IMR-90 (cell line): ENCODE measurements at regions of chr1 and their contacts with region 1.

Region 1: DNA sequence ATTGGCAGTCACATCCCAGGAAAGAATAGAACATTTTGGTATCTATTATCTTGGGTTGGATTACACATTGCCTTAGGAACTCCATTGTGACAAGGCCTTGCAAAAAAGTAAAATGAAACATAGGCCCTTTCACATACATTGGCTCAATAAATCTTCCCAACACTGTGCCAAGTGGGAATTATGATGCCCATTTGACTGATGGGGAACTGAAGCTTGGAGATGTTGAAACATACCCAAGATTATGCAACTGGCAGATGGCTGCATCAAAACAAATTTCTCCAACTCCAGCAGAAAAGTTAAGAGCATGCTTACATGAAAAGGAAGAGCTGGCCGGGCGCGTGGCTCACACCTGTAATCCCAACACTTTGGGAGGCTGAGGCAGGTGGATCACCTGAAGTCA is 26.9 kb downstream of the PLEKHO1 start:
- DNase-seq: no peak
- ATAC-seq: no peak
- H3K4me3 ChIP-seq: no peak overlapping the region
- H3K27ac ChIP-seq: no peak overlapping the region
- H3K4me1 ChIP-seq: peaks cover 4% of the 10 kb centered on the region
- H3K27me3 ChIP-seq: no peaks in the 10 kb centered on the region
- CTCF ChIP-seq: no peak
- POLR2A ChIP-seq: no peak
- RAD21 ChIP-seq: no peak

Region 2: GRCh38 chr1:150162862-150163706 is 13.5 kb before region 1 on chr1:
- CTCF ChIA-PET with region 1: interaction called, 4 read pairs
- POLR2A ChIA-PET with region 1: interaction called, 15 read pairs
- dilution Hi-C with region 1: no loop called
- in situ Hi-C with region 1: no loop called
- intact Hi-C with region 1: no loop called
- DNase-seq: peak; percentile 100
- ATAC-seq: peak; percentile 88
- H3K4me3 ChIP-seq: peak overlapping the region; percentile 8; the same call in 1 of the 2 replicates
- H3K27ac ChIP-seq: peak overlapping the region; percentile 93
- H3K4me1 ChIP-seq: peaks cover 45% of the 10 kb centered on the region
- H3K27me3 ChIP-seq: no peaks in the 10 kb centered on the region
- CTCF ChIP-seq: peak; percentile 13; the same call in 1 of the 2 replicates
- POLR2A ChIP-seq: peak; percentile 93
- RAD21 ChIP-seq: no peak

Region 3: DNA sequence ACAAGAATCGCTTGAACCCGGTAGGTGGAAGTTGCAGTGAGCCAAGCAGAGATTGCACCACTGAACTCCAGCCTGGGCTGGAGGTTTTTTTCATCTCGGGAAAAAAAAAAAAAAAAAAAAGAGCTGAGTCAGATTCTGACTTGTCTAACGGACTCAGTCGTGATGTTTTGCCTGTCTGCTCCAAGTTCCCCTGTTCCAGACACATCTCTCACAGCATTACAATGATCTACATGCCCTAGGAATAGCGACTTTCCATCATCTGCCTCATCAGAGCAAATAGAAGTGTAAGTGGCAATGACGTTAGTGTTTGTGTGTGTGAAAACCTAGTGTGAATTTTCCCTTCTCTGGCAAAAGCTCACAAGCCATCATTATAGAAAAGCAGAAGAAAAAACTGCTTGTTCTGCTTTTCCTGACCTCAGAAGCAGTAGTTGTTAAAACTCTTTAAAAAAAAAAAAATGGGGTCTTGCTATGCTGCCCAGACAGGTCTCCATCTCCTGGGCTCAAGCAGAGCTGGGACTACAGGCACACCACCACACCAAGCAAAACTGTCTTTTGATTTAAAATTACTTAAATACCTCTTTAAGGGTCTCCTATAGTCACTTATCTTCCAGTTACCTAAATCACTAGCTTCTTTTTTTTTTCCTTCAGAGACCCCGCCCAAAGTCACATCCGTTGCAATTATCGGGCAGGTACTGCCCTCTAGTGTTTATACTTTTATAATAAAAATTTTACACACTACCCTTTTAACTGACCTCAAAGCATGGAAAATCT is 10.4 kb after region 1 on chr1:
- CTCF ChIA-PET with region 1: interaction called, 12 read pairs
- POLR2A ChIA-PET with region 1: interaction called, 4 read pairs
- dilution Hi-C with region 1: no loop called
- in situ Hi-C with region 1: no loop called
- intact Hi-C with region 1: no loop called
- DNase-seq: peak; percentile 56
- ATAC-seq: peak; percentile 61
- H3K4me3 ChIP-seq: no peak overlapping the region
- H3K27ac ChIP-seq: peak overlapping the region; percentile 75
- H3K4me1 ChIP-seq: peaks cover 2% of the 10 kb centered on the region; the same call in 1 of the 2 replicates
- H3K27me3 ChIP-seq: no peaks in the 10 kb centered on the region
- CTCF ChIP-seq: peak; percentile 60
- POLR2A ChIP-seq: no peak
- RAD21 ChIP-seq: peak; percentile 75

Region 4: GRCh38 chr1:150213170-150214098 is 36.8 kb after region 1 on chr1:
- CTCF ChIA-PET with region 1: no interaction called
- POLR2A ChIA-PET with region 1: no interaction called
- dilution Hi-C with region 1: no loop called
- in situ Hi-C with region 1: no loop called
- intact Hi-C with region 1: loop called (anchors 2 kb)
- DNase-seq: peak; percentile 84
- ATAC-seq: peak; percentile 99
- H3K4me3 ChIP-seq: peak overlapping the region; percentile 47
- H3K27ac ChIP-seq: no peak overlapping the region
- H3K4me1 ChIP-seq: no peaks in the 10 kb centered on the region; the same call in 1 of the 2 replicates
- H3K27me3 ChIP-seq: no peaks in the 10 kb centered on the region
- CTCF ChIP-seq: peak; percentile 28; the same call in 1 of the 2 replicates
- POLR2A ChIP-seq: peak; percentile 26; the same call in 1 of the 2 replicates
- RAD21 ChIP-seq: no peak